ENCODE measurements at regions of chr4 and their contacts with region 1.

Region 1: DNA sequence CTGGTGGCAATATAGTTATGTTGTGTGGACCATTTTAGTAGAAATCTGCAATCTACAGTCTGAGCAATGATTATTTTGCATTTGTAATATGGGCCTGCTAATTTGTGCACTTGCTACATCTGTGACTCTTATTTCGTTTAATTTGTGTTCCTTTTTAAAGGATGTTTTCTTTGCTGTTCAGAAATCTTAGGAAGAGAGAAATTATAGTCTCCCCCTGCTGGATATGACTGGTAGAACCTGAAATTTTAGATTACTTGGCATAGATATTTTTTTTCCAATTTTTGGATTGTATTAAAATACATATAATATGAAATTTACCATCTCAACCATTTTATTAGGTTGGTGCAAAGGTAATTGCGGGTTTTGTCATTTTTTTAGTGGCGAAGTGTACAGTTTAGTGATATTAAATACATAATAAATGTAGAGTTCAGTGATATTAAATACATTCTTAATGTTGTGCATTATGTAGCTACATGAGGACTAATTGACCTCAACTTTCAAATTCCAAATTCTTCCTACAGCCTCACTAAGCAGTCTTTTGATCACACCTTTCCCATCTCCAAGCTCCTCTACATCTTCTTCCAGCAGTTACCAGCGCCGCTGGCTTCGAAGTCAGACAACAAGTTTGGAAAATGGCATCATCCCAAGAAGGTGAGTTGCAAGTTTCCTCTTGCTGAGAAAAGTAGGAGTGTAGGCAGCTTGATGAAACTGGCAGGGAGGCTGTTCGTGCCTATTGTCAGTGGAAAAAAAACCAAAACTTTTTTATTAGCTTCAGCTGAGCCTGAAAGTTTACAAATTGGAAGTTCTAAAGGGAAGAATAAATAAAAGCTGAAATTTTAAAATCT is 82.2 kb downstream of the FNIP2 start:
- DNase-seq: no peak
- H3K4me3 Mint-ChIP-seq: no peak overlapping the region
- H3K27ac Mint-ChIP-seq: no peak overlapping the region
- H3K4me1 Mint-ChIP-seq: peaks cover 9% of the 10 kb centered on the region
- H3K27me3 Mint-ChIP-seq: no peaks in the 10 kb centered on the region

Region 2: GRCh38 chr4:158729716-158730559 is 121.1 kb before region 1 on chr4:
- intact Hi-C with region 1: loop called (anchors 1 kb)
- DNase-seq: peak; percentile 28
- H3K4me3 Mint-ChIP-seq: no peak overlapping the region
- H3K27ac Mint-ChIP-seq: no peak overlapping the region
- H3K4me1 Mint-ChIP-seq: peaks cover 30% of the 10 kb centered on the region
- H3K27me3 Mint-ChIP-seq: peaks cover 30% of the 10 kb centered on the region

Region 3: GRCh38 chr4:158778156-158778711 is 72.8 kb before region 1 on chr4:
- intact Hi-C with region 1: loop called (anchors 2 kb)
- DNase-seq: no peak
- H3K4me3 Mint-ChIP-seq: peak overlapping the region; percentile 61
- H3K27ac Mint-ChIP-seq: peak overlapping the region; percentile 64
- H3K4me1 Mint-ChIP-seq: peaks cover 47% of the 10 kb centered on the region
- H3K27me3 Mint-ChIP-seq: no peaks in the 10 kb centered on the region